ENCODE measurements at regions of chr1 and their contacts with region 1.

Region 1: GRCh38 chr1:212743901-212744475 is 44.3 kb upstream of the BATF3 start:
- DNase-seq: no peak
- ATAC-seq: no peak

Region 2: GRCh38 chr1:211843018-211843417 is 901.0 kb before region 1 on chr1:
- intact Hi-C with region 1: loop called (anchors 5 kb)
- DNase-seq: no peak
- ATAC-seq: no peak

Region 3: DNA sequence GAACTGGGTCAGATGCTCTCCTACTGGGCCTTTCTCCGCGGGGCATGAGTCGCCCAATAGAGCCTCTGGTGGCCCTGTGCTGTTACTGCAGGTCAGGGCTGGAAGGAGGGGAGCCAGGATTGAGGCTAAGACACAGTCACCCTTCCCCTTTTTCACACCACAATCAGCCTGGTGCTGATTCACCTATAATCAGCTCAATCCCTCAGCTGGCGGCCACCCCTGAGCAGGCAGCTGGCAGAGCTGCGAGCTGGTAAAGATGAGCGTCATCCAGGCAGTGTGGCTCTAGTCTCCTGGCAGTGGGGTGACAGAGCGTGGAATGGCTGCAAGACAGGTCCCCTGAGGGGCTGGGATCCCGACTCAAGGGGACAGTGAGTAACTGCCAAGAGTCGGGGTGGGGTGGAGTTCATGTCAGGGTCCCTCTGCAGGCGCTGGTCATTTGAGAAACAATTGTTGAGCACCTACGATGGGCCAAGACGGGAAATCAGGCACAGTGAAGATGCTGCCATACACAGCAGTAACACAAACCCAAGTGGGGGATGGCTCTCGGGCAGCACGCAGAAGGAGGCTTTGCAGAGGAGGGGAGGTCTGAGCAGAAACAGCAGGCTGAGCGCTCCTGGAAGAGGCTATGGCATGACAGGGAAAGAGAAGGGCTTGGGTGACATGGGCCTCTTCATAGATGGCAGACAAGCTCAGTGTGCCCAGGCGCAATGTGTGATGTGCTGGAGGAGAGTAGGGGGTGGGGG is 113.7 kb before region 1 on chr1:
- intact Hi-C with region 1: no loop called
- DNase-seq: peak; percentile 84
- ATAC-seq: peak; percentile 85

Region 4: DNA sequence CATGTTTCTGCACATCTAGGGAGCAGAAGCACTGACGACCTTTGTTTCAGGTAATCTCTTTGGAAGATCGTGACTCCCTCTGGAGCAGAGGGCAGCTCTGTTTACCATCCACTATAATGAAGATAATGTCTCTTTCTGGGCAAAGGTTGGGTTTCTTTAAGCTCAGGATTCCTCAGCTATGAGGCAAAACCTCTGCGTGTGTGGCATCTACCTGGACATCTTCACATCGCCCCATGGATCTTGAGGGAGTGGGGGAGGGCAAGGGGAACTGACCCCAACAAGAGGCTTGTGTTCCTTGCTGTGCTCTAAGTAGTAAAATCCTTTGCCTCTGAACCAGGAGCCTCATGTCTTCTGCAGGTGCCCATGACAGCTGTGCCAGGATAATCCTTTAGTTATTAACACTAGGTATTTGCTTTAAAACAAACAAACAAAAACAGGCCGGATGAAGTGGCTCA is 83.9 kb after region 1 on chr1:
- intact Hi-C with region 1: no loop called
- DNase-seq: no peak
- ATAC-seq: no peak

Measured in Right ventricle myocardium inferior (tissue), 1 donor.